Activated CD4-positive, alpha-beta memory T cell treated with anti-CD3 and anti-CD28 coated beads, Interleukin-2, amount 10 ng/mL, durations not matched to agents 7 days and 5 days (primary cell): ENCODE measurements at regions of chr19 and their contacts with region 1.

Region 1: DNA sequence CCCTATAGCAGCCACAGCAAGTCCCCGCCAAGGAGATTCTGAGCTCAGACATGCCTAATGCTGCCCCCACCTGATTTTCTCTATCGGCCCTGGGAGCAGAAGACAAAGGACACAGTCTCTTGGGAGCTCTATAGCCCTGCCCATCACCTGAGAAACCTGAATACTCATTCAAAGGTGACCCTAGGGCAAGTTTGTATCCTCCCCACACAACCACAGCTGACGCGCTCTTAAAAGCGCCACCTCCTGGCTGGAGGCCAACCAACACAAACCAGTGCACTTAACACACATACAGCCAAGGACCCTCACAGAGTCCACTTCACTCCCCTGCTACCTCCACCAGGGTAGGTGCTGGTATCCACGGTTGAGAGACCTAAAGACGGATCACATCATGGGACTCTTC is 8.8 kb upstream of the IGFL4 start:
- DNase-seq: no peak
- H3K4me3 Mint-ChIP-seq: no peak overlapping the region
- H3K27ac Mint-ChIP-seq: no peak overlapping the region
- H3K4me1 Mint-ChIP-seq: no peaks in the 10 kb centered on the region
- H3K27me3 Mint-ChIP-seq: peaks cover 73% of the 10 kb centered on the region

Region 2: DNA sequence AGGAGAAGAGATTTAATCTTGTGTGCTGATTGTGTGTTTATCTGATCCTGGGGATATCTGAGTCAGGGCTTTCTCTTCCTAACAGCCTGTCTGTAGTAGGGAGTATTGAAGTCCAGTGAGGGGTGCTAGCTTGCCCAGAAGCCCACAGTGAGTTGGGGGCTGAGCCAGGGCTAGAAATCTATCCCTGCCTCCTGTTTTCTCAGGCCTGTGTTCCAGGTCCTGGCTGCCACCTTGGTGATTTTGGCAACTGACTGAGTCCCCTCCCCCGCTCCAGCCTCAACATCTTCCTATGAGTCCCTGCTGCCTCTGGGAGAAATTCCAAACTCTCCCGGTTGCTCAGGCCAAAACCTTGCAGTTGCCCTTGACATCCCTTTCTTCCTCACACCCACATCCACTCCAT is 68.2 kb before region 1 on chr19:
- CTCF ChIA-PET with region 1: no interaction called
- POLR2A ChIA-PET with region 1: no interaction called
- DNase-seq: no peak
- H3K4me3 Mint-ChIP-seq: no peak overlapping the region
- H3K27ac Mint-ChIP-seq: no peak overlapping the region
- H3K4me1 Mint-ChIP-seq: no peaks in the 10 kb centered on the region
- H3K27me3 Mint-ChIP-seq: peaks cover 32% of the 10 kb centered on the region

Region 3: GRCh38 chr19:46022431-46023310 is 26.9 kb before region 1 on chr19 and contains the start of gene PGLYRP1:
- CTCF ChIA-PET with region 1: interaction called, 12 read pairs
- POLR2A ChIA-PET with region 1: no interaction called
- DNase-seq: no peak
- H3K4me3 Mint-ChIP-seq: no peak within 1 kb of the TSS
- H3K27ac Mint-ChIP-seq: no peak within 1 kb of the TSS
- H3K4me1 Mint-ChIP-seq: peaks cover 11% of the 10 kb centered on the region
- H3K27me3 Mint-ChIP-seq: peaks cover 24% of the 10 kb centered on the region
- total RNA-seq, gene PGLYRP1: not detected

Region 4: GRCh38 chr19:46063201-46063600 is 13.6 kb after region 1 on chr19:
- CTCF ChIA-PET with region 1: no interaction called
- POLR2A ChIA-PET with region 1: no interaction called
- DNase-seq: no peak
- H3K4me3 Mint-ChIP-seq: no peak overlapping the region
- H3K27ac Mint-ChIP-seq: no peak overlapping the region
- H3K4me1 Mint-ChIP-seq: no peaks in the 10 kb centered on the region
- H3K27me3 Mint-ChIP-seq: peaks cover 52% of the 10 kb centered on the region

Region 5: DNA sequence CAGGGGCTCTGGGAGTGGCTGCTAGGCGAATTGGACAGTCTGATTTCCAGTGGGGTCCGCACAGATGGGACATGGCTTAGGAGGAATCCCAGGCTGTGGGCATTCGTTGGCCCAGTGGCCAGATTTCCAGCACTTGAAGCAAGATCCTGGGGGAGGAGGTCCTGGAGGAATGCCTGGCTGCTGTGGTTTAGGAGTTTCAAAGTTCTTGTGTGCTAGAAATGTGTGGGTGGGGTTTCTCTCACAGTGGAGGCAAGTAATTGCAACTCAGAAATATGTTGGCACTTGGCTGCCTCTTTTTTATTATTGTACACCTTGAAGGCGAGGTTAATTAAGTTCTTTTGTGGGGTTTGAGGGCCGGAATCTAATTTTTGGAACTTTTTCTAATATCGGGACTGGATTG is 57.8 kb after region 1 on chr19:
- CTCF ChIA-PET with region 1: no interaction called
- POLR2A ChIA-PET with region 1: no interaction called
- DNase-seq: no peak
- H3K4me3 Mint-ChIP-seq: no peak overlapping the region
- H3K27ac Mint-ChIP-seq: no peak overlapping the region
- H3K4me1 Mint-ChIP-seq: no peaks in the 10 kb centered on the region
- H3K27me3 Mint-ChIP-seq: peaks cover 15% of the 10 kb centered on the region

Region 6: GRCh38 chr19:46308510-46308909 is 258.9 kb after region 1 on chr19:
- CTCF ChIA-PET with region 1: no interaction called
- POLR2A ChIA-PET with region 1: no interaction called
- DNase-seq: no peak
- H3K4me3 Mint-ChIP-seq: no peak overlapping the region
- H3K27ac Mint-ChIP-seq: no peak overlapping the region
- H3K4me1 Mint-ChIP-seq: no peaks in the 10 kb centered on the region
- H3K27me3 Mint-ChIP-seq: peaks cover 2% of the 10 kb centered on the region